AG04450 (cell line): ENCODE measurements at regions of chr16 and their contacts with region 1.

Region 1: GRCh38 chr16:69796351-69797118 is 34.4 kb downstream of the WWP2 start:
- DNase-seq: peak; percentile 42
- H3K4me3 ChIP-seq: no peak overlapping the region
- H3K27ac ChIP-seq: no peak overlapping the region
- H3K27me3 ChIP-seq: no peaks in the 10 kb centered on the region
- CTCF ChIP-seq: peak; percentile 91

Region 2: GRCh38 chr16:69812688-69813014 is 16.1 kb after region 1 on chr16:
- CTCF ChIA-PET with region 1: interaction called, 27 read pairs
- POLR2A ChIA-PET with region 1: no interaction called
- DNase-seq: no peak
- H3K4me3 ChIP-seq: no peak overlapping the region
- H3K27ac ChIP-seq: no peak overlapping the region
- H3K27me3 ChIP-seq: no peaks in the 10 kb centered on the region
- CTCF ChIP-seq: no peak

Region 3: GRCh38 chr16:69831212-69832123 is 34.9 kb after region 1 on chr16:
- CTCF ChIA-PET with region 1: no interaction called
- POLR2A ChIA-PET with region 1: no interaction called
- DNase-seq: no peak
- H3K4me3 ChIP-seq: no peak overlapping the region
- H3K27ac ChIP-seq: no peak overlapping the region
- H3K27me3 ChIP-seq: no peaks in the 10 kb centered on the region
- CTCF ChIP-seq: no peak

Region 4: GRCh38 chr16:69937465-69937951 is 141.0 kb after region 1 on chr16:
- CTCF ChIA-PET with region 1: interaction called, 216 read pairs
- POLR2A ChIA-PET with region 1: no interaction called
- DNase-seq: no peak
- H3K4me3 ChIP-seq: no peak overlapping the region
- H3K27ac ChIP-seq: no peak overlapping the region
- H3K27me3 ChIP-seq: no peaks in the 10 kb centered on the region
- CTCF ChIP-seq: no peak; the same call in 1 of the 2 replicates